ENCODE measurements at regions of chr19 and their contacts with region 1.

Region 1: DNA sequence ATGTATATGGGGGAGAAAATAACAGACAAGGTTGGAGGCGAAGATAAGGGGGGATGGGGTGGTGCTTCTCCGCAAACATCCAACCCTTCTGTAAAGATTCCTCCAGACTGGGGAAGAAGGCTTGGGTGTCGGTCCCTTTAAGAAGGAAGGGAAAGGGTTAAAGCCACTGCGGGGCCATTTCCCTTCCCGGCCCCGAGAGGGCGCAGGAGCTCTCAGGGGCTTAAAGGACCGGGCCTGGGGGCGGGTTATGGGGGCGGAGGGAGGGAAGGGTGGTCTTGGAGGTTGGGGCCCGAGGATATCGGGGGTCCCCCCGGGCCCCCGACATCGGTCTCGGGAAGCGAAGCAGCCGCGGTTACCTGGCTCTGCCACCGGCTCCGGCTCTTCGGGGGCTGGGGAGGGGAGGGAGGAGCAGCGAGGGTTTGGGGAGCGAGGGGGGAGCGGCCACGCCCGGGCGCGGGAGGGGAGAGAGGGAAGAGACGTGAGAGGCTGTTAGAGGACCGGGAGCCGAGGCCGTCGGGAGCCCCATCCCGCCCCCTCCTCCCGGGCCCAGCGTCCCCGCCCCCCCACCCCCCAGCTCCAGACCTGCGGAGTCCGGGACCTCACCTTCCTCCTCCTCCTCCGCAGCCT is 2.8 kb downstream of the TNNT1 start:
- DNase-seq: no peak
- H3K4me3 ChIP-seq: peak overlapping the region in 1 of 4 donors; percentile 23
- H3K27ac ChIP-seq: no peak overlapping the region
- H3K4me1 ChIP-seq: peaks cover 9 to 26% (median 22%) of the 10 kb centered on the region in 4 donors
- H3K27me3 ChIP-seq: peaks cover 0 to 100% (median 55%) of the 10 kb centered on the region in 4 donors
- CTCF ChIP-seq: peak in 1 of 3 experiments; percentile 21
- EP300 ChIP-seq: no peak
- POLR2A ChIP-seq: no peak

Region 2: DNA sequence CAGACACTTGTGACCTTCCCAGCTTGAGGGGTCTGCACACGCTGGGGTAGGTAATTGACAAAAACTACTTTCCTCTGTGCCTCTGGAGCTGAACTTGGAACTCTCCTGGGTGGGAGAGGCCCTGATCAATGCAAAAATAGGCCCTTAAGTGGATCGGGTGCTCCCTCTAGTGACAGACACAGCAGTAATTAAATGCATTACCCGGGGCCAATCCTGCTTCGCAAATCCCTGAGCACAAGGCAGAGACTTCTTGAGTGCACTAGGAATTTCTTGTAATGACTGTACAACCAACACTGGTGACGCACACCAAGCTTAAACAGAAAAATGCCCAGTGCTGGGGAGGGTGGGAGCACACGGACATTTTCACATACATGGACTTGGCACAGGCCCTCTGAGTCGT is 272.0 kb after region 1 on chr19:
- intact Hi-C with region 1: loop called (anchors 10 kb)
- DNase-seq: no peak
- H3K4me3 ChIP-seq: no peak overlapping the region
- H3K27ac ChIP-seq: no peak overlapping the region
- H3K4me1 ChIP-seq: no peaks in the 10 kb centered on the region
- H3K27me3 ChIP-seq: peaks cover 0 to 59% (median 0%) of the 10 kb centered on the region in 4 donors
- CTCF ChIP-seq: peak; percentile 53 to 65 (median 61)
- EP300 ChIP-seq: no peak
- POLR2A ChIP-seq: no peak

Region 3: DNA sequence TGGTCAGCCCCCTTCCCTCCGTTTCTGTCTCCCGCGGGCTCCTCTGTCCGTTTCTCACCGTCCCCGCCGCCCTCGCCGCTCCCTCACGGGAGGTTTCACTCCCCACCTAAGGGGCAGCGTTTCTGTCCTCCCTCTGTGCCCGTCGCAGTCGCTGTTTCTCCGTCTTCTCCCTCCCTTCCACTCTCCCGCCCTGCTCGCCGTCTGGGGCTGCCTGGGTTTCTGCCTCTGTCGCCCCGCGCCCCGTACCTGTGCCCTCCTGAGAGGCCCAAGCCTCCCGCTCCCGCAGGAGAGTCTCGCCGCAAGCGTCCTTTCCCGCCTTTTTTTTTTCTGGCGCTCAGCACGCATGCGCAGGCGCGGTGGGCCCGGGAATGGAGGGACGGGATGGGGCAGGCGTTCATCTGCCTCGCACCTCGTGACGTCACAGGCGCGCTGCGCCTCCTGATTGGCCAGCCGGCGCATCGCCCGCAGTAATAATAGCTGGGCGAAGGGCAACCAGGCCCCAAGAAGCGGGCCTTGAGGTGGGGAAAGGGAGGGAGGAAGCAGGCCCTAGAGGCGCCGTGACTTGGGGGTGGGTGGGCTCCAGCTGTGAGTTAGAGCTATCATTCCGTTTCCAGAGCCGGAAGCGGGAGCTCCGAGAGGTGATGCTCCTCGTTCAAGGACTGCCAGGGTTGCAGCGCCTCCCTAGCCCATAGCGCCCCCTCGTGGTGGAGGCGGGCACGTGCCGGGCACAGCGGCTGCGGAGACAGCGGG is 357.5 kb after region 1 on chr19:
- intact Hi-C with region 1: loop called (anchors 5 kb)
- DNase-seq: peak; percentile 98
- H3K4me3 ChIP-seq: peak overlapping the region; percentile 57 to 62 (median 61)
- H3K27ac ChIP-seq: peak overlapping the region; percentile 78 to 90 (median 86)
- H3K4me1 ChIP-seq: peaks cover 8 to 22% (median 14%) of the 10 kb centered on the region in 4 donors
- H3K27me3 ChIP-seq: no peaks in the 10 kb centered on the region
- CTCF ChIP-seq: peak; percentile 99 to 100 (median 99)
- EP300 ChIP-seq: no peak
- POLR2A ChIP-seq: no peak